ENCODE measurements at regions of chr4 and their contacts with region 1.

Region 1: GRCh38 chr4:124253080-124253479 is 459.5 kb downstream of the ANKRD50 start:
- DNase-seq: no peak
- ATAC-seq: no peak
- H3K4me3 ChIP-seq: no peak overlapping the region
- H3K27ac ChIP-seq: no peak overlapping the region
- H3K4me1 ChIP-seq: no peaks in the 10 kb centered on the region
- H3K27me3 ChIP-seq: peaks cover 0 to 4% (median 0%) of the 10 kb centered on the region in 4 donors
- CTCF ChIP-seq: no peak

Region 2: DNA sequence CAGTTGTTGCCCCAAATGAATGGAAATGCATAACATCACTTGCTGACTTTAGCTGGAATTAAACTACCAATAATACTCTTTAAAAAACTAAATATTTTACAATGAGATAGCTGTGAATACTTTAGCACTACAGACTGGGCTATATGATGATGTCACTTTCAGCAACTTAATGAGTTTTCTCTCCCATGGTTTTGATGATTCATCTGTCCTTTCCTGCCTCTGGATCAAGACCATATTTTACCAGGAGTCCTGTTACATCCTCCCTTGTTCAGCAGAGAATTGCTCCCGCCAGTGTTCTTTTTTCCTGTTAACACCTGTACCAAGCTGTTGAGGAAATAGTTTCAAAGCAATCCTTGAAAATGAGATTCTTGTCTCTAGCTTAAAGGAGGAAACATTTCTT is 313.5 kb before region 1 on chr4:
- intact Hi-C with region 1: no loop called
- DNase-seq: no peak
- ATAC-seq: no peak
- H3K4me3 ChIP-seq: no peak overlapping the region
- H3K27ac ChIP-seq: no peak overlapping the region
- H3K4me1 ChIP-seq: no peaks in the 10 kb centered on the region
- H3K27me3 ChIP-seq: no peaks in the 10 kb centered on the region
- CTCF ChIP-seq: no peak

Region 3: DNA sequence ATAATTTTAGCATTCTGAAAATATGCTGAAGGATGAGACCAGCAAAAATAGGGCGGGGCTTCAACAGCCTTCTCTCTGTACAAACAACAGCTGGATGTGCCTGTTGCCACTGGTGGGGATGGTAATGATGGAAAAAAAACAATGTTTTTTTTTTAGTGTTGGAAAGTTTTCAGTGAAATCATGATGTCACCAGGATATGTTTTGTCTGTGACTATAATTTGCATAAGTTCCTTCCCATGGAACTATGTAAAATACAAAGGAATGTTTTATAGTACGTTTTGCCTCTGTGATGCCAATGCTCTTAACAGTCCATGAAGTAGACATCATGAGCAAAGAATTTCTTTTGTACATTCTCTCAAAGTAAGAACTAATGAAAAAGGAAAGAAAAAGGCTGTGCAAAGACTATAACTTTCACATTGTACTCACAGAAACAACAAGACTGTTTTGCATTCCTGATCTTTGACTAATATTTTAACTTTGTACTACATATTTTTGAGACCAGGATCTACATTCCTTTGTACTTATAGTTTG is 266.7 kb before region 1 on chr4:
- intact Hi-C with region 1: loop called in 1 of 3 experiments (anchors 5 kb)
- DNase-seq: no peak
- ATAC-seq: peak in 1 of 4 donors; percentile 24
- H3K4me3 ChIP-seq: no peak overlapping the region
- H3K27ac ChIP-seq: peak overlapping the region in 1 of 4 donors; percentile 19
- H3K4me1 ChIP-seq: no peaks in the 10 kb centered on the region
- H3K27me3 ChIP-seq: no peaks in the 10 kb centered on the region
- CTCF ChIP-seq: no peak